Adrenal gland (tissue), 19 donors: ENCODE measurements at regions of chr1 and their contacts with region 1.

Region 1: DNA sequence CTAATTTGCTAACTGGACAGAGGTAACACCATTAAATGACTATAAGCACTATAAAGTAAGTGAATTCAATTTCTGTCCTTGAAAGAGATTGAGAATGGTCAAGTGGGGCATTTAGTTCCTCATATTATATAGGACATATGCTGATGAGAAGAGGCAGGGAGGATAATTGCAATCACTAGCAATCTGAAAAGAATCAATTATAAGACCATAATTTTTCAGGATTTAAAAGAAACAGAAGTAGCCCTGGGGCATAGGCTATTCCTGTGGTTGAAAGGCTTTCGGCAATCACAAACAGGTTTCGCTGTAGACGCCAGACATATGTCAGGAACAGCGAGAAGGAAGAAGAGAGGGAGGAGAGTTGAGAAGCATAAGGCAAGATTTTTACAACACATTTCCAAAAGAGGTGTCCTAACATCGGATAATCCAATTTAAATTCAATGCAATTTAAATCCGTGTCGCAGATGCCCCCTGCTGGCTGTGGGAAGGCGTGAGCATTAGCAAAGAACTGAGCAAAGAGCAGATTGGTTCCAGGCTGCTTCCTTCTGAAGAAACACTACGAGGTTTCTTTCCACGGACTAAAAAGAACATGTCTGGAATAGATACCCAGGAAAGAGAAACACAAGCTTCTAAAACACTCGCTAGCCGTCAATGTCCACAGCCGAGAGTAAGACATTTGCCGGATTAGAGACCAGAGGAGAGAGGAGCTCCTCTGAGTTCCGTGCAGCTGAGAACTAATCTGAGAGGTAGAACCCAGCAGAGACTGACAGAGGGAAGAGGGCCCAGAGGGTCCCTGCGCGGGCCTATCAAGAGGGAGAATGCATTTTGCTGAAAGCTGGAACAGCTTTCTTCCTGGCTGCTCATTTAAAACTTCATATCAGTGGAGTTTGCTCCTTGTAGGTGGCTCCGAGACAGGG is 27.9 kb downstream of the RGS5 start:
- DNase-seq: peak; percentile 65 to 91 (median 74)
- H3K4me3 ChIP-seq: no peak overlapping the region
- H3K27ac ChIP-seq: peak overlapping the region in 1 of 5 donors; percentile 29
- H3K4me1 ChIP-seq: peaks cover 0 to 23% of the 10 kb centered on the region in 2 donors
- H3K27me3 ChIP-seq: no peaks in the 10 kb centered on the region
- CTCF ChIP-seq: peak; percentile 73 to 93 (median 86)
- POLR2A ChIP-seq: no peak

Region 2: GRCh38 chr1:162861101-162861500 is 313.7 kb before region 1 on chr1 and contains the start of gene CCDC190:
- intact Hi-C with region 1: loop called in 1 of 2 experiments (anchors 5 kb)
- DNase-seq: no peak
- H3K4me3 ChIP-seq: no peak within 1 kb of the TSS
- H3K27ac ChIP-seq: no peak within 1 kb of the TSS
- H3K4me1 ChIP-seq: no peaks in the 10 kb centered on the region
- H3K27me3 ChIP-seq: no peaks in the 10 kb centered on the region
- CTCF ChIP-seq: no peak
- POLR2A ChIP-seq: no peak
- total RNA-seq, gene CCDC190: not detected

Region 3: DNA sequence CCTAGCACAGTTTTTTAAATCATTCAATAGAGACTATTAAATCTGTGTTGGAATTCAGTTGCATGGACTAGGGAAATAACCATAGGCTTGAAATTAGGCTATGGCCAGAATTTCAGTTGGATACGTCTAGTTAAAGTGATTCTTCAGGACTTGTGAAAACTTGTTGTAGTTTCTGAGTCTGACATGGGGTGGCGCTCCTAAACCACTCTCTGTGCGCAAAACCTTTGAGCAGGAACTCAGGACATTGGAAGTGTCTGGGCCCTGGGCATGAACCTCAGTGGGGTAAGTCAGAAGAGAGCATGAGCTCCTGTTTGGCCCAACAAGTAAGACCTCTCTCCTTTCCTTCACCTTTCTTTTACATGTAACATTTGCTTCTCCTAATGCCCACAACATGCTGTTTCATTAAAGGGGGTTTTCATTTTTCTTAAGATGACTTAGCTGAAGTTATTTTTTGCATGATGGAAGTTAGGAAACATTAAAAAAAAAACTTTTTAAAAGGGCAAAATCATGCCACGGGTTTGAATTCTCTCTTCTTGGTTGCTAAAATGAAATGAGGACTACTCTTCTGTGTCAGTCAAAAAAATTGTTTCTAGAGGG is 296.7 kb before region 1 on chr1:
- intact Hi-C with region 1: loop called in 1 of 2 experiments (anchors 5 kb)
- DNase-seq: peak; percentile 46 to 94 (median 75)
- H3K4me3 ChIP-seq: no peak overlapping the region
- H3K27ac ChIP-seq: no peak overlapping the region
- H3K4me1 ChIP-seq: no peaks in the 10 kb centered on the region
- H3K27me3 ChIP-seq: no peaks in the 10 kb centered on the region
- CTCF ChIP-seq: peak; percentile 35 to 91 (median 84)
- POLR2A ChIP-seq: no peak

Region 4: GRCh38 chr1:163071405-163072255 is 103.2 kb before region 1 on chr1:
- intact Hi-C with region 1: loop called (anchors 5 kb)
- DNase-seq: peak; percentile 67 to 93 (median 81)
- H3K4me3 ChIP-seq: no peak overlapping the region
- H3K27ac ChIP-seq: no peak overlapping the region
- H3K4me1 ChIP-seq: no peaks in the 10 kb centered on the region
- H3K27me3 ChIP-seq: no peaks in the 10 kb centered on the region
- CTCF ChIP-seq: peak; percentile 60 to 78 (median 73)
- POLR2A ChIP-seq: no peak

Region 5: GRCh38 chr1:163094589-163094988 is 80.2 kb before region 1 on chr1:
- intact Hi-C with region 1: no loop called
- DNase-seq: no peak
- H3K4me3 ChIP-seq: no peak overlapping the region
- H3K27ac ChIP-seq: no peak overlapping the region
- H3K4me1 ChIP-seq: peaks cover 0 to 14% of the 10 kb centered on the region in 2 donors
- H3K27me3 ChIP-seq: no peaks in the 10 kb centered on the region
- CTCF ChIP-seq: no peak
- POLR2A ChIP-seq: no peak

Region 6: DNA sequence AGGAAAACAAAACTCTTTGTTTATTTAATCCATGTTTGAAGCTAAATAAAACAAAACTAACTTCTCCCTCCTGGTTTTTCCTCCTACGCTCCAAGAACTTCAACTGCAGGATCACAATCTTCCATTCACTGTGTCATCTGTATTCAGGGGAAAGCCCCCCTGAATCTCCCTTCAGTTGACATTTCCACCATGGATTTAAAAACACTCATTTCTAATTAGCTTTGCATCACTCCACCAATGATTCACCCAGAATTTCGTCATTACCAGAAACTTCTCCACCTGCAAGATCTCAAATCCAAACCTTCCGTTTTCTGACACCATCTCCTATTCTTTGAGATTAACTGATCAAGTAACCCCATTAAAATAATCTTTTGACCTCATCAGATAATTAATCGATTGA is 38.8 kb after region 1 on chr1:
- intact Hi-C with region 1: no loop called
- DNase-seq: no peak
- H3K4me3 ChIP-seq: no peak overlapping the region
- H3K27ac ChIP-seq: no peak overlapping the region
- H3K4me1 ChIP-seq: no peaks in the 10 kb centered on the region
- H3K27me3 ChIP-seq: no peaks in the 10 kb centered on the region
- CTCF ChIP-seq: no peak
- POLR2A ChIP-seq: no peak

Region 7: DNA sequence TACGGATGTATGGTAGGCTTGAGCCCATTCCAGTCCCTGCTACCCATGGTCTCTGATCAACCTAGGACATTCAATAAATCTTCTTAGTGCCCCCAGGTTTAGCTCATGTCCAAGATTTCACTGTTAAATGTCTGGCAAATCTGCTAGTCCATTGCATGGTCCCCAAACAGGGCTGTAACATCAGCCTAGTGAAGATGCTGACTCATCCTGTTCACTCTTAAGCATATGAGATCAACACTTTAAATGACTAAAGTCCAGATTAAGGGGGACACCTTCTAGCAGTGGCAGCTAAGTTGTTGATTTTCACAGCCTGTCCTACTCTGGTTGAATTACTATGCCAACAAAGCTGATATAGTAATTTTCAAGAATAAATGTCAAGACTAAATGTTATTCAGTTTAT is 100.4 kb after region 1 on chr1:
- intact Hi-C with region 1: no loop called
- DNase-seq: no peak
- H3K4me3 ChIP-seq: no peak overlapping the region
- H3K27ac ChIP-seq: no peak overlapping the region
- H3K4me1 ChIP-seq: no peaks in the 10 kb centered on the region
- H3K27me3 ChIP-seq: no peaks in the 10 kb centered on the region
- CTCF ChIP-seq: no peak
- POLR2A ChIP-seq: no peak